ENCODE measurements at regions of chr9 and their contacts with region 1.

Region 1: GRCh38 chr9:111533099-111533790 is 8.3 kb downstream of the ZNF483 start:
- DNase-seq: no peak
- H3K4me3 ChIP-seq: no peak overlapping the region
- H3K27ac ChIP-seq: no peak overlapping the region
- H3K4me1 ChIP-seq: no peaks in the 10 kb centered on the region
- H3K27me3 ChIP-seq: no peaks in the 10 kb centered on the region
- CTCF ChIP-seq: no peak

Region 2: DNA sequence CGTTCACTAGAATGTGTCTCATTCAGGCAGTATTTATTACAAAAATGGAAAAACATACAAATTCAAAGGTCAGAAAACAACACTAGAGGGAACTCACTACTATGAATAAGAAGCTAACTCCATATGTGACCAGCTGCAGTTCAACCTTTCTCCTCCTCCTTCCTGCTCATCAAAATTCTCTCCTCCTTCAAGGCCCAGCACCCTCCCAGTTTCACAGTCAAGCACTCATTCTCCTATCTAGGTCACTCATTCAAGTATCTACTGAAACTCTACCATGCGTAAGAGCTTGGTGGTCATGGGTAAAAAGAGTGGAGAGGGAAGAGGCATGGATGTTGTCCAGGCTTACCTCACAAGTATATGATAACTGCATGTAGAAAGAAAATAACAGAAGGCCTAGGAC is 76.7 kb before region 1 on chr9:
- CTCF ChIA-PET with region 1: no interaction called
- dilution Hi-C with region 1: loop called (anchors 5 kb)
- in situ Hi-C with region 1: no loop called
- intact Hi-C with region 1: no loop called
- DNase-seq: no peak
- H3K4me3 ChIP-seq: no peak overlapping the region
- H3K27ac ChIP-seq: no peak overlapping the region
- H3K4me1 ChIP-seq: no peaks in the 10 kb centered on the region
- H3K27me3 ChIP-seq: no peaks in the 10 kb centered on the region
- CTCF ChIP-seq: no peak

Region 3: DNA sequence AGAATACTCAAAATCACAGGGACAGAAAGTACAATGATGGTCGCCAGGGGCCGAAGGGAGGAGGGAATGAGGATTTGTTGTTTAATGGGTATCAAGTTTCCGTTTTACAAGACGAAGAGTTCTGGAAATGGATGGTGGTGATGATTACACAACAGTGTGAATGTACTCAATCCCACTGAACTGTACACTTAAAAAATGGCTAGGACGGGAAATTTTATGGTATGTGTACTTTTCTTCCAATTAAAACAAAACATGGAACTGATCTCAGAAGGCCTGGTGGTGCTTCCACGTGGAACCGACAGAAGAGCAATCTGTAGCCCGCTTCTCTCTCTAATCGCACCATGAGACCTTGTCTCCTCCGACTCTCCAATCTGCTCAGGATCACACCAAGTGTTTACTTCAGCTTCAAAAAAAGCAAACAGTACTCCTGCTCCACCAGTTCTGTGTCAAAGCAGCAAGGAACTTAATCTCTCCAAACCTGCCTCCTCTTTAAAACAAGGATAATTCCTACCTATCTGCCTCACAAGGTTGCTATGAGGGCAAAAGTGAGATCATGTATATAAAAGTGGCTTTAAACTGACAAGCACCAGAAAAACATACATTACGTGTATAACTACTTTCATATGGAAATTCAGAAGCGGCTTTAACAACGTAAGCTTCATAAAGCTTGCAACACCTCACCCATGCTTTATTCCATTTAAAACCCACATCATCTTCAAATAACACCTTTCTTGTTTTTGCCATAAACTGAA is 51.2 kb before region 1 on chr9:
- CTCF ChIA-PET with region 1: no interaction called
- dilution Hi-C with region 1: no loop called
- in situ Hi-C with region 1: no loop called
- intact Hi-C with region 1: no loop called
- DNase-seq: peak; percentile 8
- H3K4me3 ChIP-seq: peak overlapping the region; percentile 95 to 98 (median 96)
- H3K27ac ChIP-seq: peak overlapping the region; percentile 92
- H3K4me1 ChIP-seq: peaks cover 6% of the 10 kb centered on the region
- H3K27me3 ChIP-seq: no peaks in the 10 kb centered on the region
- CTCF ChIP-seq: no peak

Region 4: DNA sequence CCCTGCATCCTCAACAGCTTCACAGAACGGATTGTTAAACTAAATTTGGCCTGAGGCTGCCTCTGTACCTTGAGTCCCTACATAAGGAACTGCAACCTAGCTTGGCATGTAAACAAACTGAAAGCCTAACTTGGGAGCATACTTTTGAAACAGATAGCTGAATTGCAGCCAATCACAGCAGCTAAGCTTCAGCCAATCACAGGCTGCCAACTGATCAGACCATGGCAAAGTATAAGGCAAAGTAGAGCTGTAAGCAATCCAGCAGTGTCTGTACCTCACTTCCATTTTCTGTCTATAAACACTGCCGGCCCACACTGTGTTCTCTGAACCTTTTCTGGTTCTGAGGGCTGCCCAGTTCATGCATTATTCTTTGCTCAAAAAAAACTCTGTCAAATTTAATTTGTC is 17.2 kb before region 1 on chr9:
- CTCF ChIA-PET with region 1: no interaction called
- dilution Hi-C with region 1: no loop called
- in situ Hi-C with region 1: no loop called
- intact Hi-C with region 1: no loop called
- DNase-seq: no peak
- H3K4me3 ChIP-seq: no peak overlapping the region
- H3K27ac ChIP-seq: no peak overlapping the region
- H3K4me1 ChIP-seq: peaks cover 13% of the 10 kb centered on the region
- H3K27me3 ChIP-seq: no peaks in the 10 kb centered on the region
- CTCF ChIP-seq: no peak

Region 5: GRCh38 chr9:111572950-111573604 is 39.8 kb after region 1 on chr9:
- CTCF ChIA-PET with region 1: no interaction called
- dilution Hi-C with region 1: loop called (anchors 5 kb)
- in situ Hi-C with region 1: no loop called
- intact Hi-C with region 1: no loop called
- DNase-seq: no peak
- H3K4me3 ChIP-seq: no peak overlapping the region
- H3K27ac ChIP-seq: no peak overlapping the region
- H3K4me1 ChIP-seq: no peaks in the 10 kb centered on the region
- H3K27me3 ChIP-seq: no peaks in the 10 kb centered on the region
- CTCF ChIP-seq: no peak